Breast epithelium (tissue), 4 donors: ENCODE measurements at regions of chr16 and their contacts with region 1.

Region 1: DNA sequence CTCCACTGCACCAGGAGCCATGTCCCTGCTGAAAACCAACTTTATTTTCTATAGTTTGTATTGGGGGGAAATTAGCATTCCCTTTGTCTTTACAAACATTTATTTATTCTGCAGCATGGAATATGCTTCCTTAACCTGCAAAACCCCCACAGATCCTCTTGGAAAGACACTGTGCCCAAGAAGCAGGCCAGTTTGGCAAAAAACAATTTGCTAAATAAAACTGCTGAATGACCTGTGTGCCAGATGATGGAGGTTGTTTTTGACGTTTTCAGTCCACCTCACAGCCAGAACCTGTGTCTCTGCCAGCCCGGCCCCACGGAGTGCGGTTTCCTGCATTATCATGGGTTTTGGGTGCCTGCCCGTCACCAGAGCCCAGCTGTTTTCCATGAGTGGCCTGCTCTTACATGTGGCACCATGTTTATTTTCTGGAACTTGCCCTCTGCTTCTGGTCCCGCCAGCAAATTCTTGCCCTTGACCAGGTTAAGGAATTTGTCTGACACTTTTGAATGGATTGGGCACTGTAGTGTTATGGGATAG is 26.4 kb downstream of the ORC6 start:
- DNase-seq: no peak
- H3K4me3 ChIP-seq: no peak overlapping the region
- H3K27ac ChIP-seq: no peak overlapping the region
- H3K4me1 ChIP-seq: no peaks in the 10 kb centered on the region
- H3K27me3 ChIP-seq: no peaks in the 10 kb centered on the region
- CTCF ChIP-seq: no peak
- POLR2A ChIP-seq: no peak

Region 2: GRCh38 chr16:47342055-47342454 is 626.2 kb after region 1 on chr16:
- intact Hi-C with region 1: loop called (anchors 5 kb)
- DNase-seq: no peak
- H3K4me3 ChIP-seq: no peak overlapping the region
- H3K27ac ChIP-seq: no peak overlapping the region
- H3K4me1 ChIP-seq: no peaks in the 10 kb centered on the region
- H3K27me3 ChIP-seq: no peaks in the 10 kb centered on the region
- CTCF ChIP-seq: no peak
- POLR2A ChIP-seq: no peak